Activated naive CD4-positive, alpha-beta T cell treated with anti-CD3 and anti-CD28 coated beads for 36 hours (primary cell): ENCODE measurements at regions of chrX and their contacts with region 1.

Region 1: DNA sequence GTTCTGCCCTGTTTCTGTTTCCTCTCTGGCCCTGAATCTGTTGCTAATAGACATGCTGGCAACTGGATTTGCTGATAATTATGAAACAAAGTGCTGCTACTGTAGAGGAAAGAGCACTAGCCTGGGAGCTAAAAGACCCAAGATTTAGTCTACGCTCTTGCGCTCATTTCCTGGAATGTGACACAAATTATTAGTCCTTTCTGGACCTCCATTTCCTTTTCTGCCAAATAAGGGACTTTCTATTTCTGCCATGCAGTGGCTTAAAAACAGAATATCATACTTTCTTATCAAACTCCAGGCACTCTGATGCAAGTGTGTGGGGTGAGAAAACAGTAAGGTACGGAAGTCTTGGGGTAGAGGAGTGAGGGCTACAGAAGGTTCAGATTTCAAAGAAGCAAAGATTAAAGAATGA is 48.3 kb upstream of the GPR174 start:
- DNase-seq: no peak
- H3K4me3 Mint-ChIP-seq: peak overlapping the region; percentile 68
- H3K27ac Mint-ChIP-seq: peak overlapping the region; percentile 94
- H3K4me1 Mint-ChIP-seq: peaks cover 71% of the 10 kb centered on the region
- H3K27me3 Mint-ChIP-seq: no peaks in the 10 kb centered on the region

Region 2: DNA sequence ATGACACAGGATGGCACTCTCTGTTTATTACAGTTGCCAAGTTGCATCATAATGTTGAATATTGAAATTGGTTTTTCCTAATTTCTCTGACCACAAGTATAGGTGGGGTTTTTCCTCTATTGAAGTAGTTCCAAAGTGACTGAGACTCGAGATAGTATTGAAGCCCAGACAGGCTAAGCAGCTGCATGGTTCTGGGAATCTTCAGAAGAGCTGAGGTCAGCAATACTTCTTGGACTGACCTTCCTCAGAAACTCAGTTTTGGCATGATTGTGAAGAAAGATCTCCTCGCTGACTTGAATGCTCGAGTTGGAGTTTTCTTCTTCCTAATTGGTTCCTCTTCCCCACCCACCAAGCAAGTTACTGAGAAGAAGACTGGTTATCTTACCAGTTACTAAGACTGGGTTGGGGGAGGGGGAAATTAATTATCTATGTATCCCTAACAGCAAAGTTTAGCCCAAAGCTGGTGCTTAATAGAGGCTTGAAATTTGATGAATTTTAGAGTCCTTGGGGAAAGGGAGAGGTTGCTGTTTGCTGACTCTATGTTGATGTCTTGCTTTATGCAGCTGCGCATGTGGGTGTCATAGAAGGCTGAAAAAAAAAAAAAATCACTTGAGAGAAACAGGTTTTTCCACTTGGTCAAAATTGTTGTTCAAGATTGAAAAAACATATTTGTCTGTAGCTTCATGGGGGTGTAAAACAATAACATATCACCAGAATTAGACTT is 59.8 kb before region 1 on chrX:
- CTCF ChIA-PET with region 1: no interaction called
- intact Hi-C with region 1: no loop called
- DNase-seq: no peak
- H3K4me3 Mint-ChIP-seq: peak overlapping the region; percentile 36
- H3K27ac Mint-ChIP-seq: no peak overlapping the region
- H3K4me1 Mint-ChIP-seq: peaks cover 42% of the 10 kb centered on the region
- H3K27me3 Mint-ChIP-seq: no peaks in the 10 kb centered on the region

Region 3: DNA sequence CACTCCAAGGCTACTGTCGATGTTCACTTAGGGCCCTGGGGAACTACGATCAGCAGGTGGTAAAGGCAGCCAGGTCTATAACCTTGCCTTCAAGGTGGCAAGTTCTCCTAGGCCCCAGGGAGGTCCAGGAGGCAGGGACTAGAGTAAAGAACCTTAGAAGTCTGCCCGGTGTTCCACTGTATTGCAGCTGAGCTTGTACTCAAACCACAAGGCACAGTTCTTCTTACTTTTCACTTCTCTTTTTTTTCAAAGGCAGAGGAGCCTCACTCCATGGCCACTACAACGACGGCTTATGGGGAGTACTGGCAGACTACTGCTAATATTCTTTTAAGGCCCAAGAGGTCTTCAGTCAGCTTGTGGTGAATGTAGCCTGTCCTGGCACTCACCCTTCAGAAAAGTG is 30.5 kb before region 1 on chrX:
- CTCF ChIA-PET with region 1: no interaction called
- intact Hi-C with region 1: no loop called
- DNase-seq: no peak
- H3K4me3 Mint-ChIP-seq: no peak overlapping the region
- H3K27ac Mint-ChIP-seq: no peak overlapping the region
- H3K4me1 Mint-ChIP-seq: no peaks in the 10 kb centered on the region
- H3K27me3 Mint-ChIP-seq: no peaks in the 10 kb centered on the region

Region 4: GRCh38 chrX:79107891-79108718 is 12.0 kb after region 1 on chrX:
- CTCF ChIA-PET with region 1: interaction called, 3 read pairs
- intact Hi-C with region 1: loop called (anchors 1 kb)
- DNase-seq: no peak
- H3K4me3 Mint-ChIP-seq: peak overlapping the region; percentile 49
- H3K27ac Mint-ChIP-seq: peak overlapping the region; percentile 88
- H3K4me1 Mint-ChIP-seq: peaks cover 64% of the 10 kb centered on the region
- H3K27me3 Mint-ChIP-seq: no peaks in the 10 kb centered on the region